CD8-positive, alpha-beta memory T cell (primary cell): ENCODE measurements at regions of chr18 and their contacts with region 1.

Region 1: DNA sequence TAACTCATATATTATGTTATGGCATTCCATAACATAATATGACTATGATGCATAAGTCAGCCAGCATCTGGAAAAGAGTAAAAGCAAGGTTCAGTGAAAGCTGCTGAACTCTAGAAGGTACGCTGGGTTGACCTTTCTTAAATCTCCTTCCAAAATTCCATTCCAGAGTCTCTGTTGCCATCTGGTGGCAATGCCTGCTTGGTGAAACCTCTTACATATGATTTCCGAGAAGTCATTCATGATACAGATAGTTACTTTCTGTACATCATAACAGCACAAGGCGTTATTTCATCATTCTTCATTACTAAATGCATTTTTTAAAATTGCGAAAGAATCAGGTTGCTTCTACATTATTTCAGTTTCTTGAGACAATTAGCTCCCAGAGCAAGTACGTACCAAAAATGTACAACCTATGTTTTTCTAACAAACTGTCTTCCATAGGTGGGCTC is 7.0 kb upstream of the EPG5 start:
- DNase-seq: peak; percentile 38 to 79 (median 54)
- H3K4me3 ChIP-seq: no peak overlapping the region
- H3K4me3 Mint-ChIP-seq: no peak overlapping the region
- H3K27ac ChIP-seq: no peak overlapping the region
- H3K27ac Mint-ChIP-seq: peak overlapping the region in 1 of 8 donors; percentile 32
- H3K4me1 ChIP-seq: peaks cover 3% of the 10 kb centered on the region
- H3K4me1 Mint-ChIP-seq: peaks cover 5 to 8% (median 7%) of the 10 kb centered on the region in 3 donors
- H3K27me3 ChIP-seq: no peaks in the 10 kb centered on the region
- H3K27me3 Mint-ChIP-seq: peaks cover 0 to 3% of the 10 kb centered on the region in 2 donors

Region 2: GRCh38 chr18:45962461-45962860 is 11.7 kb before region 1 on chr18:
- CTCF ChIA-PET with region 1: interaction called, 15 read pairs
- POLR2A ChIA-PET with region 1: no interaction called
- DNase-seq: peak; percentile 11 to 75 (median 45)
- H3K4me3 ChIP-seq: no peak overlapping the region
- H3K4me3 Mint-ChIP-seq: peak overlapping the region; percentile 30 to 81 (median 64)
- H3K27ac ChIP-seq: no peak overlapping the region
- H3K27ac Mint-ChIP-seq: peak overlapping the region; percentile 82 to 99 (median 94)
- H3K4me1 ChIP-seq: peaks cover 46% of the 10 kb centered on the region
- H3K4me1 Mint-ChIP-seq: peaks cover 64 to 83% (median 77%) of the 10 kb centered on the region in 3 donors
- H3K27me3 ChIP-seq: no peaks in the 10 kb centered on the region
- H3K27me3 Mint-ChIP-seq: peaks cover 0 to 2% of the 10 kb centered on the region in 2 donors

Region 3: DNA sequence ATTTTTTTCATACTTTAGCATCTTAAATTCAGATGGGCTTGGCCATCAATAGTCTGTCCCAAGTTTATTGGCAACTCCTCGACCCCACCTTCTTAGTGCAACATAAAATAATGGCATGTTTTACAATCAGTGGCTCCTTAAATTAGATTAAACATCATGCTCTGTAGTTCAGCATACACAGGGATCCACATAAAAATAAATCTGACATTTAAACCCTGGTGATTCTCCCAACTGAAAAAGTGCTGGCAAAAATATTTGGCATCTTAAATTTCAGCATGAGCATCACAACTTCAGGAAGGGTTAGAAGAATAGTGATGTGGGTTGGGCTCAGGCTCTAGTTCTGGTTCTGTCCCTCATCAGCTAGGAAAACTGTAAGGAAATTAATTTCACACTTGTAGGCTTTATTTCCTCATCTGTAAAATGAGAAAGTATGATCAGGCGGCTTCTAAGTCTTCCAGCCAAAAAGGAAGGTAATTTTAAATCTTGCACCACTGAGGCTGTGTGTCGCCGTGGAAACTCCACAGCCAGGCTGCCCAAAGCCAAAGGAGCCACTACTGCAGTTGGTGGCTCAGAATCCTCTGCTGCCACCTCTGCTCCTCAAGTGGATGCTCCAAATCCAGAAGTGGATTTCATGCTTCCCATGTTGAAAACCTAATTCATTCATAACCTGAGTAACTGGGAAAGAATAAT is 10.6 kb after region 1 on chr18:
- CTCF ChIA-PET with region 1: no interaction called
- POLR2A ChIA-PET with region 1: no interaction called
- DNase-seq: no peak
- H3K4me3 ChIP-seq: no peak overlapping the region
- H3K4me3 Mint-ChIP-seq: no peak overlapping the region
- H3K27ac ChIP-seq: no peak overlapping the region
- H3K27ac Mint-ChIP-seq: peak overlapping the region in 1 of 8 donors; percentile 31
- H3K4me1 ChIP-seq: no peaks in the 10 kb centered on the region
- H3K4me1 Mint-ChIP-seq: no peaks in the 10 kb centered on the region
- H3K27me3 ChIP-seq: no peaks in the 10 kb centered on the region
- H3K27me3 Mint-ChIP-seq: peaks cover 0 to 3% of the 10 kb centered on the region in 2 donors